CD8-positive, alpha-beta memory T cell (primary cell): ENCODE measurements at regions of chr2 and their contacts with region 1.

Region 1: GRCh38 chr2:68837164-68837860 is 33.9 kb downstream of the BMP10 start:
- DNase-seq: peak; percentile 36 to 73 (median 48)
- H3K4me3 ChIP-seq: no peak overlapping the region
- H3K4me3 Mint-ChIP-seq: no peak overlapping the region
- H3K27ac ChIP-seq: no peak overlapping the region
- H3K27ac Mint-ChIP-seq: peak overlapping the region in 2 of 8 donors; percentile 51 to 61
- H3K4me1 ChIP-seq: peaks cover 14% of the 10 kb centered on the region
- H3K4me1 Mint-ChIP-seq: peaks cover 14 to 37% (median 16%) of the 10 kb centered on the region in 3 donors
- H3K27me3 ChIP-seq: no peaks in the 10 kb centered on the region
- H3K27me3 Mint-ChIP-seq: no peaks in the 10 kb centered on the region

Region 2: DNA sequence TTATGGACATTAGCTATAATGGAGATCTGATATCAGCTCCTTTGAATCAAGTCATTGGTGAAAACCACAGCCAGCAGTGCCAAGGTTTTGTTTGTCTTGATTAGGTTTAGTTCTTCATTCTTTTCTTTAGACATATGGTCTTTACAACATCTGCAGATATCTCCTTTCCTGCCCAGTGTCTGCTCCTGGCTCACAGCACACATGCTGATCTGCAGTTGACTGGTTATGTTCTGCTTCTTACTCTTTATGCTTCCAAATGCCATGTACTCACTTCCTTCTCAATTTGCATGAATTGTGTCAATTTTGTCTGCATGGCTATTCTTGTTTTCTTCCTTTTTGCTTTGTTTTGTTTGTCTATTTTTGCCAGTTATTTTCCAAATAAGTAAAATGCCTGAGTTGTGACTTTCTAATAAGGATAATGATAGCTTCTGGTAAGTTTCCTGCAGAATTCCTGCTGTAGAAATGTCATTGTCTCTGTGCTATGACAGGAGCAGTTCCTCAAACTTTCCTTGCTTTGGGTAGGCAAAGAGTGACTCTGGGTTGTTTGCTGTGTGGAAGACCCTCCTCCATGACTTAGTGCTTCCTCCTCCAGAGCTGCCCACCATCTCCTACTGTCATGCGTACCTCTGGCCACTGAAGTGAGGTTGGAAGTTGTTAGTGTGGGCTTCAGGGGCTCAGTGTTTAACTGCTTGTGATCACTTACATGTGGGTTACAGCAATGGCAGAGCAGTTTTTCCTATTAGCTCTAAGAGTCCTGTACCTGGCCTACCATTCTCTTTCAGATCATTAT is 94.5 kb before region 1 on chr2:
- CTCF ChIA-PET with region 1: interaction called, 18 read pairs
- POLR2A ChIA-PET with region 1: no interaction called
- DNase-seq: no peak
- H3K4me3 ChIP-seq: no peak overlapping the region
- H3K4me3 Mint-ChIP-seq: peak overlapping the region; percentile 30 to 81 (median 72)
- H3K27ac ChIP-seq: no peak overlapping the region
- H3K27ac Mint-ChIP-seq: peak overlapping the region; percentile 58 to 89 (median 80)
- H3K4me1 ChIP-seq: peaks cover 98% of the 10 kb centered on the region
- H3K4me1 Mint-ChIP-seq: peaks cover 90 to 97% (median 96%) of the 10 kb centered on the region in 3 donors
- H3K27me3 ChIP-seq: no peaks in the 10 kb centered on the region
- H3K27me3 Mint-ChIP-seq: no peaks in the 10 kb centered on the region

Region 3: DNA sequence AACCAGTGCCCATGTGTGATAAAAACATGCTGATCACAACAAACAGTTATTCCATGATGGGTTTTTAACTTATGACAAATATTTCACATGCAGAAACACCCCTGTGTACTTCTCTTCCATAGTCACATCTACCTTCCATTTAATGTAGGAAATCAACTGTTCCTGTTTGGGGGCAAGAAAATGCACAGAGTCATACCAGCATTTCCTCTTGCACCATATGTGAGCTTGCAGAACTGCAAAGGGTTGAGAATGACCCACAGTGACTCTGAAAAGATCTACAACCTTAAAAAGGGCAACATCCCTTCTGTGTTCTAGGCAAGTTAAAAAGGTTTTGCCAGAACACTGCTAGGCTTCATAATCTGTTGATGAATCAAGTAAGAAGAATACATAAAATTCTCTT is 24.0 kb after region 1 on chr2:
- CTCF ChIA-PET with region 1: no interaction called
- POLR2A ChIA-PET with region 1: no interaction called
- DNase-seq: no peak
- H3K4me3 ChIP-seq: no peak overlapping the region
- H3K4me3 Mint-ChIP-seq: no peak overlapping the region
- H3K27ac ChIP-seq: no peak overlapping the region
- H3K27ac Mint-ChIP-seq: no peak overlapping the region
- H3K4me1 ChIP-seq: no peaks in the 10 kb centered on the region
- H3K4me1 Mint-ChIP-seq: no peaks in the 10 kb centered on the region
- H3K27me3 ChIP-seq: no peaks in the 10 kb centered on the region
- H3K27me3 Mint-ChIP-seq: no peaks in the 10 kb centered on the region

Region 4: DNA sequence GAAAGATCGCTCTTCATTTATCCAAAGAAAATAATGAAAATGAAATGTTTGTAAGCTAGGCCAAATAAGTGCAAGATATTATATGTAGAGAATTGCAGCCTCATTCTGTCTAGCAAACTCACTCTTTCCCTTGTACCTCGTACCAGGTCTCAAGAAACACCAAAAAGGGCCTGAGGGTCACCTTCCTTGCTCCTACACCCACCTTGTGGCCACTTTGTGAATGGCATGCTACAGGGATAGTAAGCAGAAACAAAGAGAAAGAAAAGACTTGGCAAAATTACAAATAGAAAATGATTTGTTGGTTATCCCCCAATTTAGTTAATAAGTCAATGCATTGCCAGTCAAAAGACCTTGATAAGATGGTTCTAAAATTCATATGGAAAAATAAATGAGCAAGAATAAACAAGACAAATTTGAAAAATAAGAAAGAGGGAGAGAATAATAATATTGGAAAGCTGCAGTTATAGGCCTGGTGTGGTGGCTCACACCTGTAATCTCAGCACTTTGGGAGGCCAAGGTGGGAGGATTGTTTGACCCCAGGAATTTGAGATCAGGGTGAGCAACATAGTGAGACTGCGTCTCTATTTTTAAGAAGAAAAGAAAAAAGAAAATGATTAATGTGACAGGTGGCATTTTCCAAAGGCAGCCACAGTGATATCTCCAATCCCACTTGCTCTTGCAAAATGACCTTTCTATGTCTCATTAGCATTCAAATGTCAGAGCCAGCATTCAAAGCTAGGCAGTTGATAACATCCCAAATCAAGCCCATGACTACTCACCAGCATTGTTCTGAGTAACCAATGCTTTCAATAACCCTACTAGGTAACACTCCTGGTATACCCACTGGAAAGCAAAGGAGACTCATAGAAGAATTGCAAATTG is 72.7 kb after region 1 on chr2:
- CTCF ChIA-PET with region 1: interaction called, 20 read pairs
- POLR2A ChIA-PET with region 1: no interaction called
- DNase-seq: peak; percentile 39 to 74 (median 54)
- H3K4me3 ChIP-seq: no peak overlapping the region
- H3K4me3 Mint-ChIP-seq: peak overlapping the region in 3 of 7 donors; percentile 28 to 42 (median 30)
- H3K27ac ChIP-seq: no peak overlapping the region
- H3K27ac Mint-ChIP-seq: peak overlapping the region; percentile 43 to 90 (median 82)
- H3K4me1 ChIP-seq: peaks cover 58% of the 10 kb centered on the region
- H3K4me1 Mint-ChIP-seq: peaks cover 34 to 39% (median 36%) of the 10 kb centered on the region in 3 donors
- H3K27me3 ChIP-seq: no peaks in the 10 kb centered on the region
- H3K27me3 Mint-ChIP-seq: no peaks in the 10 kb centered on the region

Region 5: GRCh38 chr2:69012310-69013141 is 175.2 kb after region 1 on chr2:
- CTCF ChIA-PET with region 1: no interaction called
- POLR2A ChIA-PET with region 1: no interaction called
- DNase-seq: peak; percentile 11 to 54 (median 17)
- H3K4me3 ChIP-seq: peak overlapping the region; percentile 66
- H3K4me3 Mint-ChIP-seq: peak overlapping the region; percentile 77 to 86 (median 80)
- H3K27ac ChIP-seq: no peak overlapping the region
- H3K27ac Mint-ChIP-seq: peak overlapping the region in 1 of 8 donors; percentile 3
- H3K4me1 ChIP-seq: peaks cover 8% of the 10 kb centered on the region
- H3K4me1 Mint-ChIP-seq: peaks cover 13 to 19% (median 17%) of the 10 kb centered on the region in 3 donors
- H3K27me3 ChIP-seq: peaks cover 20% of the 10 kb centered on the region
- H3K27me3 Mint-ChIP-seq: peaks cover 29 to 52% of the 10 kb centered on the region in 2 donors

Region 6: DNA sequence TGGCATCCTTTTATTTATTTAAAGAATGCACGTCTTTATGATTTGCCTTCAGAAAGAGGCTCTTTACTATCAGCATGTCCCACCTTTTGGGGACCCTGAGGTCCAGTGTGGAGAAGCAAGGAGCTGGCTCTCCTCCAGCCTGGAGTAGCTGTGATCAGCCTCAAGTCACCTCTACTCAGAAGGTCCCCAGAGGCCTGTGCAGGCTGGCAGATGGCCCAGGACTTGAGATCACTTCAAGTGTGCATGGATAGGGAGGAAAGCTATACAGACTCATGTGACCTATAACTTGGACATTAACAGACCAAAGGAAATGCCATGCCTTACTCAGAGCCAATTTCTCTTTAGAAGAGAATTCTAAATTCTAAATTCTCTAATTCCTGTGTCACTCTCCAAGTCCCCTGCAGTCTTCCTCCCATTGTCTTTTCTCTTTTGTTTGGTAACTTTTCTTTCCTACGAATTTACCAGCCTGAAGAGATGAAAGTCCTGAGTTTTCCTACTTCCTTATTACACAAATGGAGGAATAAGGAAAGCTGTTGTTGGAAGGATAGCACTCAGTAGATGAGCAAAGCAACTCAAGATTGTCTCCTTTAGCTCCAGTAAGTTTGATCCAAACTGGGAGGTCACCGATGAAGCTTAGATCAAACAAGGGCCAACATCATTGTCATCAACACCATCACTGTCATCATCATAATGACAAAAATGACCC is 385.8 kb after region 1 on chr2:
- CTCF ChIA-PET with region 1: no interaction called
- POLR2A ChIA-PET with region 1: no interaction called
- DNase-seq: no peak
- H3K4me3 ChIP-seq: no peak overlapping the region
- H3K4me3 Mint-ChIP-seq: no peak overlapping the region
- H3K27ac ChIP-seq: no peak overlapping the region
- H3K27ac Mint-ChIP-seq: no peak overlapping the region
- H3K4me1 ChIP-seq: no peaks in the 10 kb centered on the region
- H3K4me1 Mint-ChIP-seq: no peaks in the 10 kb centered on the region
- H3K27me3 ChIP-seq: no peaks in the 10 kb centered on the region
- H3K27me3 Mint-ChIP-seq: peaks cover 6 to 39% of the 10 kb centered on the region in 2 donors